IMR-90 (cell line): ENCODE measurements at regions of chr19 and their contacts with region 1.

Region 1: DNA sequence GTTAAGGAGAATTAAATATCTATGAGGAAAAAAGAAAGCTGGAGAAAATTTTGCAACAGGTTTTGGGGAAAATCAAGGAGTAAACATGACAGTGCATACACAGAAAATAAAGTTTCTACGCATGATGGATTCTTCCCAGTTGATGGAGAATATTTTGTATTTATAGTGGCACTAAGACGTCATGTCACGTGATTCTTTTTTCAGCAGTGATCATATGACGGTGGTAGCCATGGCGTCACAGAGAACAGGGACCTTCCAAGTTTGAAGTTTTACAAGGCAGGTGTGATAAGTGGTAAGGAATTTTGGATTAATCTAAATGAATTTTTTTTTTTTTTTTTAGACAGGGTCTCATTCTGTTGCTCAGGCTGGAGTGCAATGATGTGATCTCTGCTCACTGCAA is 8.5 kb downstream of the MBD3L1 start:
- DNase-seq: no peak
- ATAC-seq: no peak
- H3K4me3 ChIP-seq: no peak overlapping the region
- H3K27ac ChIP-seq: no peak overlapping the region
- H3K4me1 ChIP-seq: no peaks in the 10 kb centered on the region
- H3K27me3 ChIP-seq: no peaks in the 10 kb centered on the region
- CTCF ChIP-seq: no peak
- POLR2A ChIP-seq: no peak
- RAD21 ChIP-seq: no peak

Region 2: GRCh38 chr19:6876748-6877147 is 1964.0 kb before region 1 on chr19:
- CTCF ChIA-PET with region 1: no interaction called
- POLR2A ChIA-PET with region 1: interaction called, 10 read pairs
- dilution Hi-C with region 1: no loop called
- in situ Hi-C with region 1: no loop called
- intact Hi-C with region 1: no loop called
- DNase-seq: no peak
- ATAC-seq: no peak
- H3K4me3 ChIP-seq: no peak overlapping the region
- H3K27ac ChIP-seq: no peak overlapping the region
- H3K4me1 ChIP-seq: no peaks in the 10 kb centered on the region
- H3K27me3 ChIP-seq: no peaks in the 10 kb centered on the region
- CTCF ChIP-seq: no peak
- POLR2A ChIP-seq: no peak
- RAD21 ChIP-seq: no peak

Region 3: GRCh38 chr19:8526345-8527067 is 314.2 kb before region 1 on chr19:
- CTCF ChIA-PET with region 1: no interaction called
- POLR2A ChIA-PET with region 1: no interaction called
- dilution Hi-C with region 1: no loop called
- in situ Hi-C with region 1: no loop called
- intact Hi-C with region 1: no loop called
- DNase-seq: peak; percentile 88
- ATAC-seq: peak; percentile 67
- H3K4me3 ChIP-seq: peak overlapping the region; percentile 73
- H3K27ac ChIP-seq: peak overlapping the region; percentile 72
- H3K4me1 ChIP-seq: peaks cover 4% of the 10 kb centered on the region
- H3K27me3 ChIP-seq: no peaks in the 10 kb centered on the region
- CTCF ChIP-seq: no peak
- POLR2A ChIP-seq: no peak
- RAD21 ChIP-seq: no peak

Region 4: GRCh38 chr19:8681345-8682029 is 159.2 kb before region 1 on chr19:
- CTCF ChIA-PET with region 1: no interaction called
- POLR2A ChIA-PET with region 1: no interaction called
- dilution Hi-C with region 1: no loop called
- in situ Hi-C with region 1: no loop called
- intact Hi-C with region 1: no loop called
- DNase-seq: no peak
- ATAC-seq: no peak
- H3K4me3 ChIP-seq: no peak overlapping the region
- H3K27ac ChIP-seq: no peak overlapping the region
- H3K4me1 ChIP-seq: no peaks in the 10 kb centered on the region
- H3K27me3 ChIP-seq: no peaks in the 10 kb centered on the region
- CTCF ChIP-seq: no peak
- POLR2A ChIP-seq: no peak
- RAD21 ChIP-seq: no peak

Region 5: GRCh38 chr19:8724276-8724675 is 116.4 kb before region 1 on chr19:
- CTCF ChIA-PET with region 1: no interaction called
- POLR2A ChIA-PET with region 1: no interaction called
- dilution Hi-C with region 1: no loop called
- in situ Hi-C with region 1: no loop called
- intact Hi-C with region 1: no loop called
- DNase-seq: no peak
- ATAC-seq: no peak
- H3K4me3 ChIP-seq: no peak overlapping the region
- H3K27ac ChIP-seq: no peak overlapping the region
- H3K4me1 ChIP-seq: no peaks in the 10 kb centered on the region
- H3K27me3 ChIP-seq: no peaks in the 10 kb centered on the region
- CTCF ChIP-seq: no peak
- POLR2A ChIP-seq: no peak
- RAD21 ChIP-seq: no peak